ENCODE measurements at regions of chr2 and their contacts with region 1.

Region 1: GRCh38 chr2:42086500-42086953 is 38.7 kb downstream of the PKDCC start:
- DNase-seq: peak; percentile 59
- H3K27ac ChIP-seq: no peak overlapping the region
- CTCF ChIP-seq: peak; percentile 64

Region 2: GRCh38 chr2:41847744-41848441 is 238.6 kb before region 1 on chr2:
- CTCF ChIA-PET with region 1: interaction called, 60 read pairs
- POLR2A ChIA-PET with region 1: no interaction called
- DNase-seq: no peak
- H3K27ac ChIP-seq: no peak overlapping the region
- CTCF ChIP-seq: no peak

Region 3: GRCh38 chr2:41853427-41854216 is 232.9 kb before region 1 on chr2:
- CTCF ChIA-PET with region 1: interaction called, 60 read pairs
- POLR2A ChIA-PET with region 1: no interaction called
- DNase-seq: peak; percentile 45
- H3K27ac ChIP-seq: no peak overlapping the region
- CTCF ChIP-seq: peak; percentile 69

Region 4: DNA sequence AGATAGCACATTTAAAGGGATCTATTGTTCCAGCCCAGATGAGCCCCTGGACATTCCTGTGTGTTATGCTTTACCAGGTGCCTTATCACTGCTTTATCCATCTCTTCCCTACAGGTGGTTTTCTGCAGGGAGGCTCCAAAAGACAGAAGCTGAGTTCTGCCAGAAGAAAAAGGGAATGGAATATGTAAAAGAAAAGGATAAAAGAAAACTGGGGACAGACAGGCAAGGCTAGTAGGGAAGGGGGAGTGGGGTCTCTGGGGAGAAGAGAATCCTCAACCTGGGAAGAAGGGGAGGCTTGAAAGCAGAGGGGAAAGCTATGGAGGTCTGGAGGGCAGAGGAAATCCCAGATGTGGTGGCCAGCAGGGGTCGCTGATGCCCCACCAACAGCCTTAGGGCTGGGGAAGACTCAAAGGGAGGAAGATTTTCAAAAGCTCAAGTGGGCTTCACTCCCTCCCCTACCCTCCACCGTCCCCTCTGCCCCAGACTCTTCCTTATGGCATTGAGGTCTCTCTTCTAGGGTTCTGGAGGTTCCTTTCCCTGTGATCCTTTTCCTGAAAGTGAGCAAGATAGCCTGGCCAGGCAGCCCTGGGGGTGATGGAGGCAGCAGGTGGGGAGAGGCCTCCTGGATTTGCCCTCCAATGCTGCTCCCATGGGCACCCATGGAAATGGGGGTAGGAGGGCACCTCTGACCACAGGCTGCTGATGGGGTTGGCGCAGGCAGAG is 216.8 kb before region 1 on chr2:
- CTCF ChIA-PET with region 1: interaction called, 102 read pairs
- POLR2A ChIA-PET with region 1: no interaction called
- DNase-seq: peak; percentile 68
- H3K27ac ChIP-seq: no peak overlapping the region
- CTCF ChIP-seq: peak; percentile 53

Region 5: GRCh38 chr2:42110641-42111322 is 24.3 kb after region 1 on chr2:
- CTCF ChIA-PET with region 1: no interaction called
- POLR2A ChIA-PET with region 1: no interaction called
- DNase-seq: no peak
- H3K27ac ChIP-seq: no peak overlapping the region
- CTCF ChIP-seq: no peak

Region 6: GRCh38 chr2:42169100-42169873 is 82.8 kb after region 1 on chr2 and contains the start of gene EML4:
- CTCF ChIA-PET with region 1: no interaction called
- POLR2A ChIA-PET with region 1: no interaction called
- DNase-seq: peak; percentile 89
- H3K27ac ChIP-seq: peak within 1 kb of the TSS; percentile 71
- CTCF ChIP-seq: no peak

Measured in RWPE1 (cell line).